IMR-90 (cell line): ENCODE measurements at regions of chr6 and their contacts with region 1.

Region 1: DNA sequence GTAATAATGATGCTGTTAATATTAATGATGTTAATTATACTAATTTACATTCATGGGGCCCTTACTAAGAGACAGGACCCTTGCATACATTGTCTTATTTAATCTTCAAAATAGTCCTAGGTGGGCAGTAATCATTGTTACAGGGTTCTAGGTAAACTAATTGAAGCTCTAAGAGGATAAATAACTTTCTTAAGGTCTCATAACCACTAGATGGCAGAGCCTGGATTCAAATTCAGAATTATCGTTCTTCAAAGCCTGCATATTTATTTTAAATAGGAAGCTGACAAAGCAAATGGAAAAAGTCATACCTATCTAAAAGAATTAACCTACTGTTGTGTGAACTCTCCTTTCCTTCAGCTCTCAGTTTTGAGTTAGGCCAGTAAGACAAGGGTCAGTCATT is 23.5 kb downstream of the PTCHD4 start:
- DNase-seq: peak; percentile 23
- ATAC-seq: peak; percentile 35; the same call in 1 of the 2 replicates
- H3K4me3 ChIP-seq: no peak overlapping the region
- H3K27ac ChIP-seq: no peak overlapping the region
- H3K4me1 ChIP-seq: no peaks in the 10 kb centered on the region
- H3K27me3 ChIP-seq: no peaks in the 10 kb centered on the region
- CTCF ChIP-seq: peak; percentile 33
- POLR2A ChIP-seq: no peak
- RAD21 ChIP-seq: peak; percentile 47

Region 2: GRCh38 chr6:48476257-48476656 is 388.8 kb after region 1 on chr6:
- CTCF ChIA-PET with region 1: no interaction called
- POLR2A ChIA-PET with region 1: no interaction called
- dilution Hi-C with region 1: no loop called
- in situ Hi-C with region 1: no loop called
- intact Hi-C with region 1: loop called (anchors 2 kb)
- DNase-seq: peak; percentile 30
- ATAC-seq: peak; percentile 71
- H3K4me3 ChIP-seq: no peak overlapping the region
- H3K27ac ChIP-seq: no peak overlapping the region
- H3K4me1 ChIP-seq: no peaks in the 10 kb centered on the region
- H3K27me3 ChIP-seq: no peaks in the 10 kb centered on the region
- CTCF ChIP-seq: peak; percentile 57
- POLR2A ChIP-seq: no peak
- RAD21 ChIP-seq: peak; percentile 66

Region 3: GRCh38 chr6:48757661-48758060 is 670.2 kb after region 1 on chr6:
- CTCF ChIA-PET with region 1: no interaction called
- POLR2A ChIA-PET with region 1: no interaction called
- dilution Hi-C with region 1: no loop called
- in situ Hi-C with region 1: no loop called
- intact Hi-C with region 1: no loop called
- DNase-seq: no peak
- ATAC-seq: no peak
- H3K4me3 ChIP-seq: no peak overlapping the region
- H3K27ac ChIP-seq: no peak overlapping the region
- H3K4me1 ChIP-seq: no peaks in the 10 kb centered on the region
- H3K27me3 ChIP-seq: no peaks in the 10 kb centered on the region
- CTCF ChIP-seq: no peak
- POLR2A ChIP-seq: no peak
- RAD21 ChIP-seq: no peak